Ovary (tissue), 10 donors: ENCODE measurements at regions of chr4 and their contacts with region 1.

Region 1: DNA sequence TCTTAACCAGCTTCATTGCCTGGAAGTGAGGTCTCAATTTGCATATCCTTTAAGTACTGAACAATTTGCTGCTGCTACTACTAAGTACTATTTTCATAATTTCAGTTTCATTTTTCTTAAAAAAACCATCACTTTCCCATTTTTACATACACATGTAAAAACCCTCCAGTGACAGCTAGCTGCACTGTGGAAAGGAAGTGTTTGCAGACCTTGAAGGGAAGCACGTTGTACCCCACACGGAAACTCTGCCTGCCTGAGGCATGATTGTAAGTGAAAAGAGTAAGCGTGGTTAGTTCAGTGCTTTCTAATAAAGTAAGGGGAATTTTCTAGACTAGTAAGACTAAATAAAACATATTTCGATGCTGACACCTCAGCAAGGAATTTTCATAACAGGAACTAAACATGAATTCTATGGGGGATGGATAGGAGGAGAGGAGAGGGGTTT is 103.6 kb downstream of the RAPGEF2 start:
- DNase-seq: no peak
- H3K4me3 ChIP-seq: no peak overlapping the region
- H3K27ac ChIP-seq: no peak overlapping the region
- H3K4me1 ChIP-seq: peaks cover 5% of the 10 kb centered on the region
- H3K27me3 ChIP-seq: no peaks in the 10 kb centered on the region
- CTCF ChIP-seq: no peak
- EP300 ChIP-seq: no peak
- POLR2A ChIP-seq: no peak

Region 2: DNA sequence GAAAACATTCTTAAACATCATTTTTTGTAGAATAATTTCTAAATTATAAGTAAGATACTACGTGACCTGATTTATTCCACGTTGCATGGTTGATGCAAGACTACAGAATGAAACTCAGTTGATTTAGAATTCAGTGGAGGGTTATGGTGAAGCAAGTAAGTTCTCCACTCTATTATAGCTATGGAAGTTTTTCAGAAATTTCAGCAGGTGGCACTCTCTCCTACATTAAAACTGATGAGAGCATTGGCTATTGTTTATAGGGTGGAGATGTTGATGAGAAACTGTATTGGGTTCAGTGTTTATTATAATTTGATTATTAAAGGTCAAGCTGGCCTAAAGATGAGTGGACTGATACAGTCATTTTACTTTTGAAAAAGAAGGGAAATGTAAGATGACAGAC is 349.6 kb before region 1 on chr4:
- intact Hi-C with region 1: loop called in 2 of 4 experiments (anchors 10 kb)
- DNase-seq: no peak
- H3K4me3 ChIP-seq: no peak overlapping the region
- H3K27ac ChIP-seq: no peak overlapping the region
- H3K4me1 ChIP-seq: no peaks in the 10 kb centered on the region
- H3K27me3 ChIP-seq: no peaks in the 10 kb centered on the region
- CTCF ChIP-seq: peak; percentile 20 to 50 (median 35)
- EP300 ChIP-seq: no peak
- POLR2A ChIP-seq: no peak

Region 3: DNA sequence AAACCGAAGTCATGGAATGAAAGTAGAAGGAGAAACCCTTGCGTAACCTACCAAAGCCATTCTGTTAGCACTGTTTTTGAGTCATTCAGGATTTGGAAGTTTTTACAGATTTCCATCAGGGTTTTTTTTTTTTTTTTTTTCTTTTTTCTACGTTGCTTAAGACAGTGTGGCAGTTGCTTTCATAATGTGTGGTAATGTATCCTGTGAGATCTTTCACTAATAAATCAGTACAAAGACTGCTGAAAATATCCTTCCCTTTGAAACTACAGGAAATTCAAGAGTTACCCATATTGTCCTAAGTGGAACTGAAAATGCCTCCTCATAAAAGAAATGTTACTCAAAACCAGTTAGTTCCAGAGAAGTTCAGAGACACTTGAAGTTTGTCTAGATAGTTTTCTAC is 34.2 kb after region 1 on chr4:
- intact Hi-C with region 1: no loop called
- DNase-seq: no peak
- H3K4me3 ChIP-seq: no peak overlapping the region
- H3K27ac ChIP-seq: no peak overlapping the region
- H3K4me1 ChIP-seq: no peaks in the 10 kb centered on the region
- H3K27me3 ChIP-seq: no peaks in the 10 kb centered on the region
- CTCF ChIP-seq: no peak
- EP300 ChIP-seq: no peak
- POLR2A ChIP-seq: no peak